ENCODE measurements at regions of chr6 and their contacts with region 1.

Region 1: GRCh38 chr6:46293641-46294316 is 123.0 kb upstream of the ENPP5 start:
- DNase-seq: no peak
- ATAC-seq: no peak

Region 2: DNA sequence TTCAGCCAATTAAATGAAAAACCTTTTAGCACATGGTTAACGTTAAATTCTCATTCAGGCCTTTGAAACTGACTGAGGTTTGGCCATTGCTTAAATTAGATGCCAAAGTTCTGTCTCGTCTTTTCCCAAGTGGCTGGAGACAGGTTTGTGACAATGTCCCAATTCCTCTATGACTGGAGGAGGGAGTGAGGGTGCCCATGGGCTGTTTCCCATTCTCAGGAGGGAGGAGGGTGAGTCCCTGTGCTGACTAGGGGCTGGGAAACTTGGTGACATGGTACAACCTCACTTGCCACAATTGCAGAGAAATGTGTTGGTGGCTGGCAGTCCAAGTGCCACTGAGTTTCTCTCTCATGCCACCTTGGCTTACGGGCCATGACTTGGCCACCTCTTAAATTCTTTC is 59.1 kb before region 1 on chr6:
- intact Hi-C with region 1: loop called (anchors 5 kb)
- DNase-seq: no peak
- ATAC-seq: peak; percentile 45